Right ventricle myocardium superior (tissue), 1 donor: ENCODE measurements at regions of chr16 and their contacts with region 1.

Region 1: GRCh38 chr16:71883849-71884638 is at the start of gene ZNF821:
- DNase-seq: peak; percentile 85
- ATAC-seq: peak; percentile 92
- total RNA-seq, gene ZNF821: 1.7 TPM

Region 2: GRCh38 chr16:71781741-71782140 is 102.3 kb before region 1 on chr16:
- intact Hi-C with region 1: no loop called
- DNase-seq: no peak
- ATAC-seq: no peak

Region 3: DNA sequence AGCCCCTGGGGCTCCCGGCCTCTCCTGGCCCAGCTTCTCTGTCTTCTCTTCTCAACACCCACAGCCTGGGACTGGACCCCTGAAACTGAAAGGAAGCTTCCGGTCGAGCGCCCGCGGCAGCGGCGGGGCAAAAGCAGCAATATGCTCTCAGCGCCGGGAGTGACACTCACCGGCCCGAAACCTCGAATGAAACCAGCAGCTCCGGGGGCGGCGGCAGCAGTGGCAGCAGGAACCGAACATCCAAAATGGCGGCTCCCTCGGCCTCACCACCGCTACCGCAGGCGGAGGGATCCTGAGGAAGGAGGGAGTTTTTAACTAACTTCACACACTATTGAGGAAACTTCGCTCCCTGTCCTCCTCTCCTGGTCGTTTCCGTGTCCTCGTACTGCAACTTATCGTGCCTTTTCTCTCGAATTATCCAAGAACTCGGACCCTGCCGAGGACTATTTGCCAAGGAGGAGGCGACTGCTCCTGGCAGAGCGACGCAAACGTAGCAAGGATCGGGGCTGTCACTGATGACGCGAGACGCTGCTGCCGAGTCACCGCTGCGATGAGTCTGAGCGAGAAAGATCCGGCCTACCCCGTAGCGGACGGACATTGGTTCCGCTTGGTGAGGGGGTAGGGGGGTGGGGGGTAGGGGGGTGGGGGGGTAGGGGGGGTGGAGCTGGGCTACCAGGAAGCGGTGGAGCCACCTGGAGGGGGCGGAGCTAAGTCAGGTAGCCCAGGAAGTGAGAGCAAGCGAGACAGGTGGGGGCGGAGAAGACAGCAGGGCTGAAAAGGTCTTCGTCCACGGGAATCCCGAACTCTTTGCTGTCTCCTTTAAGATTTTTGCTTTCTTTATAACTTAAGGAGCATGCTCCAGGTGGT is 75.2 kb before region 1 on chr16 and contains the start of gene AP1G1:
- intact Hi-C with region 1: loop called (anchors 5 kb)
- DNase-seq: peak; percentile 97
- ATAC-seq: peak; percentile 99
- total RNA-seq, gene AP1G1: 27.2 TPM

Region 4: DNA sequence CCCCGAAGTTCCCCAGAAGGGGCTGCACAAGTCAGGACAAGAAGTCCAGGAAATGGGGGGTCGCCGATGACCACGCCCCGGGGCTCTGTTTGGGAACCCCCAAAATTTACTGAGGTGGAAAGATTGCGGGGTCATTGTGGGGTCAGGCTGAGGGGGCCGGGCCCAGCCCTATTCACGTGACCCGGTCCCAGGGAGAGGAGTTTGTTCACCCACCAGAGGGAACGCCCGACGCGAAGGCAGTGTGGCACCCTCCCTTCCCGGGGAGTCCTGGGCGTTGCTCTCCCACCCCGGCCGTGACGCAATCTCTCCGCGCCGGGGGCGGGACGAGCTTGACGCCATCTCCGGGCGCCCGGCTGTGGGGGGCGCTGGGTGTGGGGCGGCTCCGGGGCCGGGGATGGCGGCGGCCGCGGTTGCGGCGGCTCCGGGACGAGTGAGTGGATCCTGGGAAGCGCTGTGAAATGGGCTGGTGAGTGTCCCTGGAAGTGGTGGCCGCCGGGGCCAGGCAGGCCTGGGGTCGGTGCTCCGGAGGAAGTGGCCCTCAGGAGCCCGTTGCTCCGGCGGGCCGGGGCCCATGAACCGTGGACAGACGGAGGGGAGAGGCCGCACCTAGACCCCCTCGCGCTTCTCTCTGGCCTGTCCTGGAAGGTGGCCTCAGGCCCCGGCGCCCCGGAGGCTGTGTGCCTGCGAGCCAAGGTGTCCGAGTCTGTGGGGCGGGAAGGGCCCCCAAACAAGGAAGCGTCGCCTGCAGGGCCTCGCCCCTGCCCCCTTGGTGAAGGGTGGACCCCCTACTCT is 38.2 kb before region 1 on chr16 and contains the start of gene ATXN1L:
- intact Hi-C with region 1: loop called (anchors 5 kb)
- DNase-seq: peak; percentile 94
- ATAC-seq: peak; percentile 99
- total RNA-seq, gene ATXN1L: 13.4 TPM

Region 5: GRCh38 chr16:71961066-71962039 is 77.3 kb after region 1 on chr16:
- intact Hi-C with region 1: loop called (anchors 5 kb)
- DNase-seq: peak; percentile 87
- ATAC-seq: peak; percentile 98

Region 6: GRCh38 chr16:72221630-72222024 is 337.6 kb after region 1 on chr16:
- intact Hi-C with region 1: no loop called
- DNase-seq: no peak
- ATAC-seq: no peak